ENCODE measurements at regions of chr2 and their contacts with region 1.

Region 1: GRCh38 chr2:32159678-32160077 is 6.0 kb upstream of the SLC30A6 start:
- DNase-seq: no peak
- H3K4me3 ChIP-seq: no peak overlapping the region
- H3K27ac ChIP-seq: no peak overlapping the region
- H3K4me1 ChIP-seq: peaks cover 0 to 4% (median 0%) of the 10 kb centered on the region in 4 donors
- H3K27me3 ChIP-seq: no peaks in the 10 kb centered on the region
- CTCF ChIP-seq: no peak
- EP300 ChIP-seq: no peak
- POLR2A ChIP-seq: no peak

Region 2: DNA sequence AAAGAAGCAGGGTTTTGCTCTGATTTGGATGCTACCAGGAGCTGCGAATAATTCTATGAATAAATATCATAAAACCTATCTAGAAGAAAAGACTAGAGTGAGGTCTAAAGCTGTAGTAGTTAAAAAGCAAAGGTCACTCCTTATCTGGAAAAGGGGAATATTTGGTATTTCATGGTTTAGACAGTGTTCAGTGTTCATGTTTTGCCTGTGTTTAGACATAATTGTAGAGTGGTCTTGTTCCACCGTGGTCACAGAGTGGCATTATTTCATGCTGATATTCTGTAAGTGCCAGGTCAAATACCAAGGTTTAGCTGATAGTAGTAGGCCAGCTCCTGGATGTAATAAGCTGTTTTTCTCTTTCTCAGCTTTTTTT is 85.6 kb before region 1 on chr2:
- in situ Hi-C with region 1: loop called in 1 of 4 experiments (anchors 10 kb)
- intact Hi-C with region 1: no loop called
- DNase-seq: no peak
- H3K4me3 ChIP-seq: no peak overlapping the region
- H3K27ac ChIP-seq: no peak overlapping the region
- H3K4me1 ChIP-seq: peaks cover 0 to 12% (median 4%) of the 10 kb centered on the region in 4 donors
- H3K27me3 ChIP-seq: no peaks in the 10 kb centered on the region
- CTCF ChIP-seq: no peak
- EP300 ChIP-seq: no peak
- POLR2A ChIP-seq: no peak

Measured in transverse colon (tissue), 4 donors.